B cell (primary cell): ENCODE measurements at regions of chr13 and their contacts with region 1.

Region 1: DNA sequence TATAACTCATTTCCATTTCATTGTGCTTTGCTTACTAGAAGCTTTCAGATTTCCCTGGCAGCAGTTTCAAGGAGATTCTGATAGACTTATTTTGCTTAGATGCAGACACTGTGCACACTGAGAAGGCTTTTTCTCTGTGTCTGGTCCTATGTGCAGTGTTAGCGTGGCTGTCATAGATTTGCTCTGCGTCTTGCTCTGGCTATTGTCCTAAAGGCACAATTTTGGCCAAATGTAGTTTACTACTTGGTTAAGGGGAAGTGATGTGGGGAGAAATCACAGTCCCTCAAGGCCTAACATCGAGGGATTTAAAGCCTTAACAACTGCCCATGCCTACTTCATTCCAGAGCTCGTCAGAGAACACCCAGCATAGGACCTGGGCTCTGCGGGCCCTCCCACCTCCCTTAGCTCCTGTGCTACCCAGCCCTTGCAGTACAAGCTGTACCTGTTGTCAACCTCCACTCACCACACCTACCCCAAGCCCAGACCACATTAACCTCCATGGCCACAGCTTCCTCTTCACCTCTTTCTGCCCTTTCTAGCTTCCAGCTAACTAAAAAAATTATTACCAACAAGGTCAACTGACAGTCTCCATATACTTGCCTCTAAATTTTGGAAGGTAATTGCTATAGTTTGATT is 38.9 kb upstream of the KATNAL1 start:
- DNase-seq: peak; percentile 77
- ATAC-seq: peak; percentile 88
- H3K4me3 ChIP-seq: no peak overlapping the region
- H3K4me3 Mint-ChIP-seq: peak overlapping the region; percentile 60
- H3K27ac ChIP-seq: no peak overlapping the region
- H3K27ac Mint-ChIP-seq: peak overlapping the region; percentile 39
- H3K4me1 ChIP-seq: peaks cover 23 to 28% of the 10 kb centered on the region in 2 donors
- H3K4me1 Mint-ChIP-seq: peaks cover 26% of the 10 kb centered on the region
- H3K27me3 ChIP-seq: no peaks in the 10 kb centered on the region
- H3K27me3 Mint-ChIP-seq: no peaks in the 10 kb centered on the region
- CTCF ChIP-seq: no peak

Region 2: DNA sequence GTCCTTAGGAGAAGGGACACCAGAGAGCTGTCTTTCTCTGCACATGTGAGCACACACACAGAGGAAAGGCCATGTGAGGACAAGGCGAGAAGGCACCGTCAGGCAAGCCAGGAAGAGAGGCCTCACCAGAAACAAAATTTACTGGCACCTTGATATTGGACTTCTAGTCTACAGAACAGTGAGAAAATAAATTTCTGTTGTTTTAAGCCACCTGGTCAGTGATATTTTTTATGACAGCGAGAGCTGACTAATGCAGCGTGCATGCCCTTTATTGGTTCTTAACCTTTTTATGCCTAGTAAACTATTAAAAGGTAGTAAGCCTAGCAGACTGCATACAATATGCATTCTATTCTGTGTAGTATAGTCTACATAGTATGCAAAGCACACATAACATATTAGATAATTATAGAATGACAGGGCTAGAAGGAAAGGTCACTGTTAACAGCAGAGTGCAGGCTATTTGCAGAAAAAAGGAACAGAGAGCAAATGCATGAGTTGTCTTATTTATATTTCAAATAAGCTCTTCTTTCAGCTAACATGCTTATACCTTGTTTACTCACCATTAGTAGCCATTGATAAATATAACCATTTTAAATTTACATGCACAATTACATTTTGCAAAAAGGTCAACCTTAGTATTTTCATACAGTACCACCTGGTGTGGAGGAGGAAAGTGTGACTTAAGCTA is 13.7 kb before region 1 on chr13:
- CTCF ChIA-PET with region 1: interaction called, 4 read pairs
- POLR2A ChIA-PET with region 1: no interaction called
- intact Hi-C with region 1: loop called (anchors 2 kb)
- DNase-seq: no peak
- ATAC-seq: peak; percentile 76
- H3K4me3 ChIP-seq: no peak overlapping the region
- H3K4me3 Mint-ChIP-seq: peak overlapping the region; percentile 61
- H3K27ac ChIP-seq: no peak overlapping the region
- H3K27ac Mint-ChIP-seq: peak overlapping the region; percentile 27
- H3K4me1 ChIP-seq: peaks cover 30 to 37% of the 10 kb centered on the region in 2 donors
- H3K4me1 Mint-ChIP-seq: peaks cover 58% of the 10 kb centered on the region
- H3K27me3 ChIP-seq: no peaks in the 10 kb centered on the region
- H3K27me3 Mint-ChIP-seq: no peaks in the 10 kb centered on the region
- CTCF ChIP-seq: no peak

Region 3: GRCh38 chr13:30394751-30395191 is 48.5 kb after region 1 on chr13:
- CTCF ChIA-PET with region 1: no interaction called
- POLR2A ChIA-PET with region 1: no interaction called
- intact Hi-C with region 1: no loop called
- DNase-seq: peak; percentile 70
- ATAC-seq: peak; percentile 62
- H3K4me3 ChIP-seq: peak overlapping the region; percentile 62 to 96 (median 77)
- H3K4me3 Mint-ChIP-seq: peak overlapping the region; percentile 98
- H3K27ac ChIP-seq: peak overlapping the region; percentile 92
- H3K27ac Mint-ChIP-seq: peak overlapping the region; percentile 99
- H3K4me1 ChIP-seq: peaks cover 10 to 15% of the 10 kb centered on the region in 2 donors
- H3K4me1 Mint-ChIP-seq: peaks cover 24% of the 10 kb centered on the region
- H3K27me3 ChIP-seq: no peaks in the 10 kb centered on the region
- H3K27me3 Mint-ChIP-seq: no peaks in the 10 kb centered on the region
- CTCF ChIP-seq: no peak